ENCODE measurements at regions of chr4 and their contacts with region 1.

Region 1: GRCh38 chr4:42673082-42673425 is 16.1 kb upstream of the ATP8A1 start:
- DNase-seq: peak; percentile 68
- H3K4me3 Mint-ChIP-seq: peak overlapping the region; percentile 49
- H3K27ac Mint-ChIP-seq: peak overlapping the region; percentile 94
- H3K4me1 Mint-ChIP-seq: peaks cover 70% of the 10 kb centered on the region
- H3K27me3 Mint-ChIP-seq: no peaks in the 10 kb centered on the region

Region 2: GRCh38 chr4:42633605-42634388 is 39.3 kb before region 1 on chr4:
- CTCF ChIA-PET with region 1: no interaction called
- intact Hi-C with region 1: loop called (anchors 1 kb)
- DNase-seq: no peak
- H3K4me3 Mint-ChIP-seq: no peak overlapping the region
- H3K27ac Mint-ChIP-seq: peak overlapping the region; percentile 33
- H3K4me1 Mint-ChIP-seq: peaks cover 73% of the 10 kb centered on the region
- H3K27me3 Mint-ChIP-seq: no peaks in the 10 kb centered on the region

Region 3: DNA sequence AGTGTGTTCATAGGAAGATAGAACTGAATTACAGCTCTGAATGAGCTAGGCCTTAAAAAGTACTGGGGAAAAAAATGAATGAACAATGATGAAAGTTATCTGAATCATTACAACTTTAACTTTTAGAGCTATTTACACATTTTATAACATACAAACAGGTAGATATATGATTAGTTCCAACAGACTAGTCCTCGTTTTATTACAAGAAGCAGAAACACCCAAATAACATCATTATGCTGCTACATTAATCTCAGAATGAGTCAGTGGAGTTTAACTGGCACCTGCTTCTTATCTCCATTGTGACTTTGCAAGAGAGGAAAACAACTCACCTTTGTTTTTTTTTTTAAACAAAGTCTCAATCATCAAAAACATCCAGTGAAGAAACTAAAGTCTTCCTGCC is 31.4 kb before region 1 on chr4:
- CTCF ChIA-PET with region 1: no interaction called
- intact Hi-C with region 1: loop called (anchors 1 kb)
- DNase-seq: no peak
- H3K4me3 Mint-ChIP-seq: peak overlapping the region; percentile 28
- H3K27ac Mint-ChIP-seq: peak overlapping the region; percentile 78
- H3K4me1 Mint-ChIP-seq: peaks cover 91% of the 10 kb centered on the region
- H3K27me3 Mint-ChIP-seq: no peaks in the 10 kb centered on the region

Region 4: DNA sequence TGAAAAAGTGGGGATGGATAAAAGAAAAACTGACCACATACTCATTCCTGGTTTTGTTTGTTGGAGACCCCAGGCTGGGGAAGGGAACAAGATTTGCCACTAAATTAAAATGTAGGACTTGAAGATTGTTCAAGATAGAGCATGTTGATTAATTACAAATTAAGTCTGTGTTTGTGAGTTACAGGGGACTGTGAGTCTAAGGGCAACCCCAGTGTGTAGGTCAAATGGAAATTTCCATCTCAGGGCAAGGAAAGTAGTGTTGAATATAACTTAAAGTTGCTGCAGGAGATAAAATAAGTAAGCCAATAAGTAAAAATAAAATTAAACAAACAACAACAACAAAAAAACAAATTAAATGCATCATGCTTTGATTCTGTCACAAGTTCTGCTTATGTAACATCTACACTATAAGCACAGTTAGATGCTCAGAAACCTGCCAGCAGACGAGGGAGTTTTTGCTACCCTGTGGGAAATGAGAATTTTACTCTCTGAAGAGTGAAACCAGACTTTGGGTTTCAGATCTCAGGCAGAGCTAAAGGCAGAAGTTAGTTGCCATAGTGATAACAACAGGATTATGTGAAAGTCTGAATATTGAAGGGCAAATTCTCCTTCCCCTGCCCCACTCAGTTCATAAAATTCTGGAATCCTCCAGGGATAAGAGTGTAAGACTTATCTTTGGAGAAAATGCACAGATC is 571.8 kb after region 1 on chr4:
- CTCF ChIA-PET with region 1: no interaction called
- intact Hi-C with region 1: no loop called
- DNase-seq: no peak
- H3K4me3 Mint-ChIP-seq: no peak overlapping the region
- H3K27ac Mint-ChIP-seq: no peak overlapping the region
- H3K4me1 Mint-ChIP-seq: no peaks in the 10 kb centered on the region
- H3K27me3 Mint-ChIP-seq: no peaks in the 10 kb centered on the region